A673 (cell line): ENCODE measurements at regions of chr1 and their contacts with region 1.

Region 1: DNA sequence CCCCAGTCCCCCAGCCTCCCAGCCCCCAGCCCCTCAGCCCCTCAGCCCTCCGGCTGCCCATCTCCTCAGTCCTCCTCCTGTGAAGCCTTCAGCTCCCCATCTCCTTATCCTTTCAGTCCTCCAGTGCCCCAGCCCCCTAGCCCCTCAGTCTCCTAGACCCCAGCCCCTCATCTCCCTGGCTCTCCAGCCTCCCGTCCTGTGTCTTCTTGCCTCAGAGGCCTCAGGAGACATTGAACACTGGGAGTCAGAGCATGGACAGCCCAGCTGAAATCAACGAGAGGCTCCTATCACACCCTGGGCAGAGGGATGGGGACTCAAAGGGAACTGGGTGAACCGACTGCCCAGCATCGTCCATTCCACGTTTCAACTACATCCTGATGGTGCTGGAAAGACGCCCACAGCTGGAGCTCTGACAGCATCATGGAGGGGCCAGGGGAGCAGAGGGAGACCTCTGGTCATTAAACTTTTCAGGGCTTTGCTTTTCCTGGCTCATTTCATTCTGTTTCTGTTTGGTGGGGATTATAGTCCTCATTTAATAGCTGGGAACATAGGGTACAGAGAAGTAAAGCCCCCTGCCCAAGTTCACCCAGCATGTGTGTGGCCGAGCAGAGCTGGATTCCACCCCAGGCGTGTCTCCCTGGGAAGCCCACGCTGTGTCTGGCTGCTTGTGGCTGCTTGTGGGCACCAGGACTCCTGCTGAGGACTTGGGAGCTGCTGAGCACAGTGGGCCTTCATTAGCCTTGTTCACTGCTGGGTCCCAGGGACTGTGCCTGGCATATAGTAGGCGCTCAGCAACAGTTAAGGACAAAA is 396.7 kb downstream of the PTPRU start:
- DNase-seq: no peak
- H3K4me3 ChIP-seq: no peak overlapping the region
- H3K27ac ChIP-seq: no peak overlapping the region
- H3K4me1 ChIP-seq: no peaks in the 10 kb centered on the region
- H3K27me3 ChIP-seq: no peaks in the 10 kb centered on the region
- CTCF ChIP-seq: no peak

Region 2: GRCh38 chr1:28877132-28877781 is 755.8 kb before region 1 on chr1:
- CTCF ChIA-PET with region 1: no interaction called
- POLR2A ChIA-PET with region 1: no interaction called
- intact Hi-C with region 1: no loop called
- DNase-seq: peak; percentile 85
- H3K4me3 ChIP-seq: no peak overlapping the region
- H3K27ac ChIP-seq: no peak overlapping the region
- H3K4me1 ChIP-seq: peaks cover 3% of the 10 kb centered on the region
- H3K27me3 ChIP-seq: no peaks in the 10 kb centered on the region
- CTCF ChIP-seq: peak; percentile 94

Region 3: DNA sequence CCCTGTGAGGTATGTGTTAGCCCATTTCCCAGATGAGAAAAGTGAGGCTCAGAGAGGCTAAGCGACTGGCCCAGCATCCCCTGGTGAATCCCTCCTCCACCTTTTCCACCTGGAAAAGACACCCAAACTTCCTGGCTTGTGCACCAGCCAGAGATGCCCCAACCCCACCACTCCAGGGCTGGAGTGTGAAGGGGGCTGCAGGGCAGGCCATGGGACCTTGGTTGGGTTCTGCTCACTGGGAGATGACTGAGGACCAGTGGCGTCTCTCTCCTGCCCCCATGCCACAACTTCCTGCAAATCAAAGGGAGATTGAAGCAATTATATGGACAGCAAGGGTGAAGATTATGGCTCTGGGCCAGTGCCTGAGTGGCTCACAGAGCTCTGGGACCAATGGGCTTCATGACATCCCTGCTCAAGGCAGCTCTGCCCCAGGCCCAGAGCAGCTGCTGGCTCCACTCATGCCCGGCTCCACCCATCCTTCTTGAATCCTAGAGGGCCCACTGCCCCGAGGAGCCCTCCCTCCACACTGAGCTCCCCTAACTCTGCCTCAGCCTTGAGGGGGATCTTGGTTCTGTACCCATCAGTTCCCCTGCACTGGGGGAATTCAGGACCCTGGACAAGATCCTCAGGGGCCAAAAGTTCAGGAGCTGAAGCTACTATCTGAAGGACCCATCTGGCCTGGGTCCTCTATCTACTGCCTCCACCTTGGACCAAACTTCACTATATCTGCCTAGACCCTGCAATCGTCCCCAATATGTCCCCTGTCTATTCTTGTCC is 20.2 kb after region 1 on chr1:
- CTCF ChIA-PET with region 1: interaction called, 10 read pairs
- POLR2A ChIA-PET with region 1: no interaction called
- intact Hi-C with region 1: no loop called
- DNase-seq: no peak
- H3K4me3 ChIP-seq: no peak overlapping the region
- H3K27ac ChIP-seq: no peak overlapping the region
- H3K4me1 ChIP-seq: no peaks in the 10 kb centered on the region
- H3K27me3 ChIP-seq: no peaks in the 10 kb centered on the region
- CTCF ChIP-seq: no peak

Region 4: GRCh38 chr1:29703596-29704370 is 70.8 kb after region 1 on chr1:
- CTCF ChIA-PET with region 1: no interaction called
- POLR2A ChIA-PET with region 1: no interaction called
- intact Hi-C with region 1: no loop called
- DNase-seq: peak; percentile 61
- H3K4me3 ChIP-seq: no peak overlapping the region
- H3K27ac ChIP-seq: no peak overlapping the region
- H3K4me1 ChIP-seq: peaks cover 20% of the 10 kb centered on the region
- H3K27me3 ChIP-seq: no peaks in the 10 kb centered on the region
- CTCF ChIP-seq: peak; percentile 80